ENCODE measurements at regions of chr1 and their contacts with region 1.

Region 1: GRCh38 chr1:212857992-212858460 is at the start of gene FLVCR1:
- H3K4me3 ChIP-seq: peak within 1 kb of the TSS; percentile 81
- H3K27ac ChIP-seq: peak within 1 kb of the TSS; percentile 84
- H3K4me1 ChIP-seq: peaks cover 5% of the 10 kb centered on the region; the same call in 1 of the 2 replicates
- CTCF ChIP-seq: no peak

Region 2: DNA sequence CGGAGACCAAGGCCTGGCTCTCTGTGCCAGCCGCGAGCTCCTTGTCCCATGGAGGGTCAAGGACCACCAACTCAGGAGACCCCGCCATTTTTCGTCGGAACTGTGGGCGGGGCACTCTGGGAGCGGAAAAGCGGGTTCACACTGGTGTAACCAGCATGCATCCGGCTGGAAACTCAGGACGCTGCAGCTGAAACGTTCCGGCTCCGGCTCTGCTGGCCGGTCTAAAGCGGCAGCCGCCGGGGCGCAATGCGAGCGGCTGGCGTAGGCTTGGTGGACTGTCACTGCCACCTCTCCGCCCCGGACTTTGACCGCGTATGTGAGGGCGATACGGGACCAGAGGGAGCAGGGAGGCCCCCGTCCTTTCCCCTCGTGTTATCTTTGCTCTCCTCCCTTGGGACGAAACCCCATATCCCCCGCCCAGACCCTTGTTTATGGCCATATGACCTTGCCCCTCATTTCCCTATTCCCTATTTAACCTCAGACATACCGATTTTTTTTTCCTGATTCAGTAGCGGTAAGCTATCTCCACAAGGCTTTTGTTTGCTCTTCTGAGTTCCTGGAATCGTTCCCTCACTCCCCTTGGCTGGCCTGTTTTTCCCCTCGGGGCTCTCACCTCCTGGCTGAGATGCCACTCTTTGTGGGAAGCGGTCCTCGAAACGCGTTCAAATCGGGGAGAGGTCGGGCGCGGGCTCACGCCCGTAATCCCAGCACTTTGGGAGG is 66.2 kb before region 1 on chr1 and contains the starts of genes NSL1 and TATDN3:
- CTCF ChIA-PET with region 1: interaction called, 5 read pairs
- POLR2A ChIA-PET with region 1: interaction called, 13 read pairs
- H3K4me3 ChIP-seq: peak within 1 kb of the TSS; percentile 100
- H3K27ac ChIP-seq: peak within 1 kb of the TSS; percentile 55
- H3K4me1 ChIP-seq: no peaks in the 10 kb centered on the region
- CTCF ChIP-seq: peak; percentile 63

Region 3: GRCh38 chr1:212805767-212806166 is 52.3 kb before region 1 on chr1:
- CTCF ChIA-PET with region 1: no interaction called
- POLR2A ChIA-PET with region 1: interaction called, 11 read pairs
- H3K4me3 ChIP-seq: no peak overlapping the region
- H3K27ac ChIP-seq: no peak overlapping the region
- H3K4me1 ChIP-seq: no peaks in the 10 kb centered on the region
- CTCF ChIP-seq: no peak

Measured in HEK293 (cell line).